Thyroid gland (tissue), 4 donors: ENCODE measurements at regions of chr17 and their contacts with region 1.

Region 1: GRCh38 chr17:75632863-75633485 is at the start of gene SMIM5:
- DNase-seq: peak; percentile 87 to 88
- H3K4me3 ChIP-seq: no peak within 1 kb of the TSS
- H3K27ac ChIP-seq: peak within 1 kb of the TSS; percentile 90 to 97 (median 93)
- H3K4me1 ChIP-seq: peaks cover 31 to 55% of the 10 kb centered on the region in 2 donors
- H3K27me3 ChIP-seq: no peaks in the 10 kb centered on the region
- CTCF ChIP-seq: peak; percentile 81 to 97 (median 88)
- POLR2A ChIP-seq: no peak
- total RNA-seq, gene SMIM5: 2.3 to 13.6 (median 7.9) TPM

Region 2: GRCh38 chr17:75456417-75457046 is 176.4 kb before region 1 on chr17 and contains the start of gene TMEM94:
- intact Hi-C with region 1: no loop called
- DNase-seq: peak; percentile 95 to 96
- H3K4me3 ChIP-seq: peak within 1 kb of the TSS; percentile 59 to 88 (median 87)
- H3K27ac ChIP-seq: peak within 1 kb of the TSS; percentile 78 to 83 (median 82)
- H3K4me1 ChIP-seq: peaks cover 7 to 31% of the 10 kb centered on the region in 2 donors
- H3K27me3 ChIP-seq: no peaks in the 10 kb centered on the region
- CTCF ChIP-seq: no peak
- POLR2A ChIP-seq: peak in 1 of 2 donors; percentile 72
- total RNA-seq, gene TMEM94: 52.1 to 116 (median 92.7) TPM

Region 3: DNA sequence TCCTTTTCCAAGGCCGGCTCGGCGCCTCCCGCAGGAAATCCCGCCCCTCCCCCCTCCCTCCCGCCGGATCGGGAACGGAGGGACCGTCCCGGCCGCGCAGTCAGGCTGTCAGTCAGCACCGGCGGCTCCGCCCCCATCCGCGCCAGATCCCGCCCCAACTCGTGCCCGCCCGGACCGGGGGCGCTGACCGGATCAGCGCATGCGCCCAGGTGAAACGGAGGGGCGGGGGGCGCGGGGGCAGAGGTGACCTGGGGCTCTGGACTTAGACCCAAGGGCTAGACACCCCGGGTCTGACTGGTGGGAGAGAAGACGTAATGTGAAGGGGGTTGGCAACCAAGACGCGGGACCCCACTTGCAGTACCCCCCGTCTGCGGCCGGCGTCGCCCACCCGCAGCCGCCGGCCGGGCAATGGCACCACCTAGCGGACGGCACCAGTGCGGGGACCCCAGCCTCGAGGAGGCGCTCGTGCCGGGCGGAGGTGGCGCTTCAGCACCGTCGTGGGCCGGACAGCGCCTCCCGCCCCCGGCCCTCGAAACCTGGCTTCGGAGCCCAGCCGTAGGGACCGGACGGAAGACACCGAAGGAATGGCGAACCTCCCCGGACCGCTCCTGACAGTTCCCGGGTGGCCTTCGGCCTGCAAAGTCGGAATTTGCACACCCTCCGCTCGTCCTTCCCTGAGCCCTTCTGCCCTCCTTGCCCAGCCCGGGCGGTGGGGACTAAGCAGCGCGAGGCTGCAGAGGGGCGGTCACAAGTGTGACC is 117.3 kb before region 1 on chr17 and contains the start of gene CASKIN2:
- intact Hi-C with region 1: no loop called
- DNase-seq: peak; percentile 96 to 97
- H3K4me3 ChIP-seq: peak within 1 kb of the TSS; percentile 43 to 98 (median 77)
- H3K27ac ChIP-seq: peak within 1 kb of the TSS; percentile 85 to 87 (median 85)
- H3K4me1 ChIP-seq: peaks cover 38 to 39% of the 10 kb centered on the region in 2 donors
- H3K27me3 ChIP-seq: no peaks in the 10 kb centered on the region
- CTCF ChIP-seq: peak; percentile 88 to 99 (median 96)
- POLR2A ChIP-seq: no peak
- total RNA-seq, gene CASKIN2: 15.0 to 87.2 (median 21.7) TPM

Region 4: GRCh38 chr17:75652915-75653549 is 20.1 kb after region 1 on chr17:
- intact Hi-C with region 1: loop called (anchors 2 kb)
- DNase-seq: peak in 1 of 2 donors; percentile 34
- H3K4me3 ChIP-seq: no peak overlapping the region
- H3K27ac ChIP-seq: no peak overlapping the region
- H3K4me1 ChIP-seq: no peaks in the 10 kb centered on the region
- H3K27me3 ChIP-seq: no peaks in the 10 kb centered on the region
- CTCF ChIP-seq: peak in 5 of 6 experiments; percentile 44 to 73 (median 65)
- POLR2A ChIP-seq: no peak

Region 5: DNA sequence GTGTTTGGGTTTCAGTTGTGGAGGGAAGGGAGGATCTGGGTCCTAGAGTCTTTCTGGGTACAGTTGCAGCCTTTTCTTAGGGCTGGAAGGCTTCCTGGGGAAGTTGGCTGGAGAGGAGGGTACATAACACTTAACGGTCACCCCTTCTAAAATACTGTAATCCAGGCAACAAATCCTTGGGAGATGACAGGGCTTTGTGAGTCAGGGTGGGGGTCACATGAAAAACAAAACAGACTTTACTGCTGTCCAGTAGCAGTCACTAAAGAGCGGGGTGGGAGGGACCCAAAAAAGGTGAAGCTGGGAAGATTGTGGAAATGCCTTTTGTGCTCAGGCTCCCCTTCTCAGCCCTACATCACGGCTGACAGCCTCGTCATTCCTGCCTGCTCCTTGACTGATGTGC is 40.5 kb after region 1 on chr17:
- intact Hi-C with region 1: no loop called
- DNase-seq: no peak
- H3K4me3 ChIP-seq: no peak overlapping the region
- H3K27ac ChIP-seq: no peak overlapping the region
- H3K4me1 ChIP-seq: peaks cover 0 to 5% of the 10 kb centered on the region in 2 donors
- H3K27me3 ChIP-seq: no peaks in the 10 kb centered on the region
- CTCF ChIP-seq: no peak
- POLR2A ChIP-seq: no peak

Region 6: DNA sequence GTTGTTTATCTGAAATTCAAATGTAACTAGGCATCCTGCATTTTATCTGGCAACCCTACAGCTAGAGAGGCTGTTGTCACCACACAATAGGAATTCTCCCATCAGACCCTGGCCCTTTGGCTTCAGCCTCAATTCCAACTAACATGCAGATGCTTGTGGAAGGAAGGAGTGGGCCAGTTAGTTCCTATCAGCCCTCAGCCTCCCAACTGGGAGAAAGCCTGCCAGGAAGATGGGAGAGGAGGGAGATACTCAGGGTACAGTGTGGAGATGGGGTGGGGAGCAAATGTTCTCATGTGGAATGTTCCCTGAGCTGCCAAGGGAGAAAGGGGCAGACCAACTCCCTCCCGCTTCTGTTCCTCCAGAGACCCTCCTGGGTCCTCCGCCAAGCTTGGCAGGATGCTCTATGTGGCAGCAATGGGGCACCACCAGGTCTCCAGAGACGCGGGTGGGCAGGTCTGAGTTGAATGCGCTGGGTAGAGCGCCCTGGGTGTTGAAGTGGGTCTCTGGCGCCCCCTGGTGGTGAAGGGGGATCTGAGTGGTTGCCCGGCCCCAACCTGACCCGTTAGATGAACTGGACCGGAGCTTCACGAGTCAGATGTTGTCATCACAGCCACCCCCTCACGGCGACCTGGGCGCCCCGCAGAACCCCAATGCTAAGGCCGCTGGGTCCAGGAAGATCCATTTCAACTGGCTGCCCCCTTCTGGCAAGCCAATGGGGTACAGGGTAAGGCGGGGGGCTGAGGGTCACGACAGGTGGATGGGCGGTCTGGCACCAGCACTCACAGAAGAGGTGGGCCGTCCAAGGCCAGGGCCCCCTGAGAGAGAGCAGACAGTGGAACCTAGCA is 116.8 kb after region 1 on chr17:
- intact Hi-C with region 1: loop called (anchors 5 kb)
- DNase-seq: peak; percentile 85 to 89
- H3K4me3 ChIP-seq: no peak overlapping the region
- H3K27ac ChIP-seq: no peak overlapping the region
- H3K4me1 ChIP-seq: peaks cover 15 to 30% of the 10 kb centered on the region in 2 donors
- H3K27me3 ChIP-seq: no peaks in the 10 kb centered on the region
- CTCF ChIP-seq: peak; percentile 72 to 98 (median 88)
- POLR2A ChIP-seq: no peak